ENCODE measurements at regions of chr10 and their contacts with region 1.

Region 1: DNA sequence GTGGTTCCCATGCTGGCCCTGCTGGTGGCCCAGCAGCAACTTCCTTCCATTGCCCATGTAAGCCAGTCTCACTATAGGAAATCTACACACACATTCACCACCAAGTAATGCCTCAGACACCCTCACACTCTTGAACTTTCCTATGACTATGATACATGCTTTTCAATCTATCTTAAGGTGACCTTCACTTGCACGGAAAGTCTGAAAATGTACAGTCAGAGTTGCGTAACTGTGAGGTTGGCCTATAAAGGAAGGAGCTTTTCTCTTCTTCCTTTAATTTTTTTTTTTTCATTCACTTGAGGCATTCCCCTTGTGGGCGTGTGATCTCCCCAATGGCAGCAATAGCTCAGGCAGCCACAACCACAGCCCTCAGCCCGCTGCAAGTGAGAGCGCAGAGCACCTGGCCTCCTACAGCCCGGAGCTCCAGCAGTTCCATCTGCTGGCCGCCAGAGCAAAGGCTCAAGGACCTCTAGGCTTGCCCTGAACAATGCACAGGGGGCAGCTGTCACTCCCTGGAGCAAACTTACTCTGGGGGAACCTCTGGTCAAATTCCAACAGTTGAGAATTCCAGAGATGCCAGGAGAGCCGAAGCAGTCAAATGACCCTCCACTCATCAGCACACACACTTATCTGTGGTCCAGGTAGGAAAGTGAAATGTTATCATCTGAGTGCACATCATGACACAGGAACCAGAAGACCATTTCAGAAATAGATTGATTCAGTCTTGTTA is 123.1 kb upstream of the ADO start:
- DNase-seq: peak; percentile 94
- ATAC-seq: peak; percentile 94
- H3K4me3 Mint-ChIP-seq: peak overlapping the region; percentile 11
- H3K27ac Mint-ChIP-seq: peak overlapping the region; percentile 86
- H3K4me1 Mint-ChIP-seq: peaks cover 34% of the 10 kb centered on the region
- H3K27me3 Mint-ChIP-seq: peaks cover 7% of the 10 kb centered on the region

Region 2: DNA sequence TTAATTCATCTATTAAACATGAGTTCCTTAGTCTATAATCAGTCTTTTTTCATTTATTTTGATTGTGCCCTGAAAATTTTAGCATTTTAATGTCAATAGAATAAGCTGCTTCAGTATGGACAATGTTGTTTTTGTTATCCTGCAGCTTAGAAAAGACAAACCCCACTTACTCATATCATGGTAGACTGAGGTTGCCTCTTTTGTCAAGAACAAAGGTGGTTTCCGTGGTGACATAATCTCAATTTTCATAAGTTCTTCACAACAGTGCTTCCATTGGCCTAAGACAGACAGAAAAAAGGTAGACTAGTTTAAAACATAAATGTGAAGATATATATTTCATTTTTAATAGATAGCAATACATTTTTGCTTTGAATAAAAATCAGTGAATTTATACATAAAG is 481.8 kb before region 1 on chr10:
- CTCF ChIA-PET with region 1: no interaction called
- POLR2A ChIA-PET with region 1: no interaction called
- intact Hi-C with region 1: no loop called
- DNase-seq: no peak
- ATAC-seq: peak; percentile 98
- H3K4me3 Mint-ChIP-seq: no peak overlapping the region
- H3K27ac Mint-ChIP-seq: no peak overlapping the region
- H3K4me1 Mint-ChIP-seq: peaks cover 31% of the 10 kb centered on the region
- H3K27me3 Mint-ChIP-seq: no peaks in the 10 kb centered on the region

Region 3: GRCh38 chr10:62610649-62611229 is 70.6 kb before region 1 on chr10:
- CTCF ChIA-PET with region 1: interaction called, 11 read pairs
- POLR2A ChIA-PET with region 1: interaction called, 5 read pairs
- intact Hi-C with region 1: loop called (anchors 2 kb)
- DNase-seq: peak; percentile 87
- ATAC-seq: peak; percentile 79
- H3K4me3 Mint-ChIP-seq: no peak overlapping the region
- H3K27ac Mint-ChIP-seq: no peak overlapping the region
- H3K4me1 Mint-ChIP-seq: peaks cover 27% of the 10 kb centered on the region
- H3K27me3 Mint-ChIP-seq: peaks cover 14% of the 10 kb centered on the region

Region 4: GRCh38 chr10:62643606-62644587 is 37.5 kb before region 1 on chr10:
- CTCF ChIA-PET with region 1: no interaction called
- POLR2A ChIA-PET with region 1: no interaction called
- intact Hi-C with region 1: loop called in 1 of 2 experiments (anchors 2 kb)
- DNase-seq: no peak
- ATAC-seq: peak; percentile 82
- H3K4me3 Mint-ChIP-seq: no peak overlapping the region
- H3K27ac Mint-ChIP-seq: peak overlapping the region; percentile 58
- H3K4me1 Mint-ChIP-seq: peaks cover 41% of the 10 kb centered on the region
- H3K27me3 Mint-ChIP-seq: no peaks in the 10 kb centered on the region

Region 5: DNA sequence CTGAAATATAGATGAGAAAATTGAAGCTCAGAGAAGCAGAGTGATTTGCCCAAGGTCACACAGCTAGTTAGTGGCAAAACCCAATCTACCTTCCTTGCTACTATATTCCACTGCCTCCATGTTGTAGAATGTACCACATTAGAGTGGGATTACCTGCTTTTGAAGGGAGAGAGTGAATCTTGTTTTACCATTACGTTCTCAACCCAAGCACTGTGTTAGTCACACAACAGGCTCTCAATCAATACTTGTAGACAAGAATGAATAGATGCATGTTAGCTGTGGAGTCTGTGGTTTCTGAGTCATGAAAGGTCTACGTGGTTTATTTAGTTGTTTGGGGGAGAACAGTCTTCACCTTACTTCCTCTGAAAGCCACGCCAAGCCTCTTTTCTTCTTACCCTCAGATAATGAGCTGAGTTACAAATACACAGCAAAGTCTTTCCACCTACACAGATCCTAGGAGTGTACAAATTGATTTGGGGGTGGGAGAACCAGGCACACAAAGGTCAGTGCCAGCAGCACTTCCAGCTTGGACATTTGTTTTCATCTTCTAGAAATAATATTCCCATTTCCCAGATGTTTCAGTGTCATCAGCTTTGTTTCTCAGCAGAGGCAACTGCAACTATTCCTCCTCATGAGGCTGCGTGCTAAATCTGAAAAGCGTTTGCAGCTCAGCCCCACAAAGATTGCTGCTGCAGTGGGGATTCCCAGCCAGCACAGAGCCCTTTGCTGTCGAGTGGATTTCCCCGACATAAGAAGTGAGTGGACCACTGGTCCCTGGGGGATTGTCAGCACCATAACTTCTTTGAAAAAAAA is 51.7 kb after region 1 on chr10:
- CTCF ChIA-PET with region 1: interaction called, 14 read pairs
- POLR2A ChIA-PET with region 1: interaction called, 22 read pairs
- intact Hi-C with region 1: loop called (anchors 1 kb)
- DNase-seq: peak; percentile 79
- ATAC-seq: peak; percentile 87
- H3K4me3 Mint-ChIP-seq: peak overlapping the region; percentile 3
- H3K27ac Mint-ChIP-seq: no peak overlapping the region
- H3K4me1 Mint-ChIP-seq: peaks cover 25% of the 10 kb centered on the region
- H3K27me3 Mint-ChIP-seq: peaks cover 5% of the 10 kb centered on the region

Region 6: DNA sequence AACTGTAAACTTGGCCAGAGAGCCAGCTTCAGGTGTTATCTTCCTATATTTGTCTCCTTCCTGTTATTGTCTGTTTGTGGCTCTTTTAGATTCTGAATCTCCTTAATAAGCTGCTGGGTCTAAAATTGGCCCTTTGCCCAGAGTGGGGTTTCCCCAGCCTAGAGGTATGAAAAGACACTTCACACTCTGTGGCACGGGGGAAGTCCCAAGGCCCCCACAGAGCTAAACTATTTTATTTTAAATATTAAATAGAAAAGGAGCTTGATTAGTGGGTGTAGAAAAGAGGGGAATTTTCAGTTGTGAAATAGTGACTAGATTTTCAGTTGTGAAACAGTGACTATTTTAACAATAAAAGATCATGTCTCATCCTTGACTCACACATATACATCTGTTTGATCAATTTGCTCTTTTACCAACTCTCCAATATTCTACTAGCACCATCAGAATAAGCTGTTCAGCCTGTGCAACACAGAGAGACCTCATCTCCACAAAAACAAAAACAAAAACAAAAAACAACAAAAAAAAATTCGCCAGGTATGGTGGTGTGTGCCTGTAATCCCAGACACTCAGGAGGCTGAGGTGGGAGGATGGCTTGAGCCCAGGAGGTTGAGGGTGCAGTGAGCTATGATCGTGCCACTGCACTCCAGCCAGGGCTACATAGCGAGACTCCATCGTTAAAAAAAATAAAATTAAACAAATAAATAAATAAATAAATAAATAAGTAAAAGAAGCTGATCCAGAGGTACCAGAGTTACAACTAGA is 98.3 kb after region 1 on chr10:
- CTCF ChIA-PET with region 1: interaction called, 3 read pairs
- POLR2A ChIA-PET with region 1: interaction called, 9 read pairs
- intact Hi-C with region 1: loop called in 1 of 2 experiments (anchors 1 kb)
- DNase-seq: peak; percentile 92
- ATAC-seq: peak; percentile 91
- H3K4me3 Mint-ChIP-seq: no peak overlapping the region
- H3K27ac Mint-ChIP-seq: peak overlapping the region; percentile 80
- H3K4me1 Mint-ChIP-seq: peaks cover 34% of the 10 kb centered on the region
- H3K27me3 Mint-ChIP-seq: peaks cover 4% of the 10 kb centered on the region

Region 7: GRCh38 chr10:62811159-62811875 is 129.9 kb after region 1 on chr10:
- CTCF ChIA-PET with region 1: interaction called, 21 read pairs
- POLR2A ChIA-PET with region 1: interaction called, 11 read pairs
- intact Hi-C with region 1: loop called (anchors 1 kb)
- DNase-seq: peak; percentile 93
- ATAC-seq: peak; percentile 48
- H3K4me3 Mint-ChIP-seq: peak overlapping the region; percentile 99
- H3K27ac Mint-ChIP-seq: peak overlapping the region; percentile 87
- H3K4me1 Mint-ChIP-seq: peaks cover 75% of the 10 kb centered on the region
- H3K27me3 Mint-ChIP-seq: no peaks in the 10 kb centered on the region

Measured in activated CD4-positive, alpha-beta T cell treated with anti-CD3 and anti-CD28 coated beads for 36 hours (primary cell).